Naive thymus-derived CD4-positive, alpha-beta T cell (primary cell): ENCODE measurements at regions of chr10 and their contacts with region 1.

Region 1: GRCh38 chr10:98446661-98447221 is at the start of gene HPS1:
- DNase-seq: peak; percentile 60 to 88 (median 79)
- ATAC-seq: peak; percentile 93
- H3K4me3 ChIP-seq: peak within 1 kb of the TSS; percentile 87
- H3K4me3 Mint-ChIP-seq: peak within 1 kb of the TSS; percentile 76 to 96 (median 92)
- H3K27ac ChIP-seq: peak within 1 kb of the TSS; percentile 88
- H3K27ac Mint-ChIP-seq: peak within 1 kb of the TSS; percentile 75 to 97 (median 89)
- H3K4me1 ChIP-seq: peaks cover 19 to 21% of the 10 kb centered on the region in 2 donors
- H3K4me1 Mint-ChIP-seq: peaks cover 18 to 56% (median 44%) of the 10 kb centered on the region in 7 donors
- H3K27me3 ChIP-seq: no peaks in the 10 kb centered on the region
- H3K27me3 Mint-ChIP-seq: peaks cover 0 to 20% (median 6%) of the 10 kb centered on the region in 5 donors
- total RNA-seq, gene HPS1: 68.5 to 107 (median 90.9) TPM

Region 2: GRCh38 chr10:98414932-98415730 is 31.6 kb before region 1 on chr10 and contains the start of gene PYROXD2:
- CTCF ChIA-PET with region 1: no interaction called
- POLR2A ChIA-PET with region 1: interaction called, 5 read pairs
- intact Hi-C with region 1: loop called in 1 of 2 experiments (anchors 1 kb)
- DNase-seq: peak in 8 of 9 donors; percentile 28 to 74 (median 56)
- ATAC-seq: peak; percentile 86
- H3K4me3 ChIP-seq: peak within 1 kb of the TSS; percentile 58
- H3K4me3 Mint-ChIP-seq: peak within 1 kb of the TSS; percentile 90 to 99 (median 96)
- H3K27ac ChIP-seq: peak within 1 kb of the TSS; percentile 69
- H3K27ac Mint-ChIP-seq: peak within 1 kb of the TSS; percentile 85 to 98 (median 94)
- H3K4me1 ChIP-seq: peaks cover 0 to 13% of the 10 kb centered on the region in 2 donors
- H3K4me1 Mint-ChIP-seq: peaks cover 12 to 42% (median 25%) of the 10 kb centered on the region in 7 donors
- H3K27me3 ChIP-seq: no peaks in the 10 kb centered on the region
- H3K27me3 Mint-ChIP-seq: no peaks in the 10 kb centered on the region
- total RNA-seq, gene PYROXD2: 11.9 to 37.1 (median 26.9) TPM

Region 3: GRCh38 chr10:99430451-99431189 is 983.9 kb after region 1 on chr10 and contains the start of gene GOT1:
- CTCF ChIA-PET with region 1: no interaction called
- POLR2A ChIA-PET with region 1: no interaction called
- intact Hi-C with region 1: loop called (anchors 1 to 10 kb)
- DNase-seq: peak; percentile 72 to 95 (median 94)
- ATAC-seq: peak; percentile 97
- H3K4me3 ChIP-seq: peak within 1 kb of the TSS; percentile 81
- H3K4me3 Mint-ChIP-seq: peak within 1 kb of the TSS; percentile 94 to 100 (median 98)
- H3K27ac ChIP-seq: peak within 1 kb of the TSS; percentile 90
- H3K27ac Mint-ChIP-seq: peak within 1 kb of the TSS; percentile 88 to 97 (median 94)
- H3K4me1 ChIP-seq: peaks cover 5 to 9% of the 10 kb centered on the region in 2 donors
- H3K4me1 Mint-ChIP-seq: peaks cover 19 to 53% (median 44%) of the 10 kb centered on the region in 7 donors
- H3K27me3 ChIP-seq: no peaks in the 10 kb centered on the region
- H3K27me3 Mint-ChIP-seq: no peaks in the 10 kb centered on the region
- total RNA-seq, gene GOT1: 8.0 to 22.2 (median 10.2) TPM

Region 4: GRCh38 chr10:99659031-99659867 is 1212.5 kb after region 1 on chr10 and contains the start of gene ENTPD7:
- CTCF ChIA-PET with region 1: no interaction called
- POLR2A ChIA-PET with region 1: no interaction called
- intact Hi-C with region 1: loop called in 1 of 2 experiments (anchors 5 kb)
- DNase-seq: peak; percentile 66 to 90 (median 77)
- ATAC-seq: peak; percentile 99
- H3K4me3 ChIP-seq: peak within 1 kb of the TSS; percentile 72
- H3K4me3 Mint-ChIP-seq: peak within 1 kb of the TSS; percentile 80 to 95 (median 92)
- H3K27ac ChIP-seq: peak within 1 kb of the TSS; percentile 69
- H3K27ac Mint-ChIP-seq: peak within 1 kb of the TSS; percentile 5 to 88 (median 73)
- H3K4me1 ChIP-seq: no peaks in the 10 kb centered on the region
- H3K4me1 Mint-ChIP-seq: peaks cover 17 to 32% (median 21%) of the 10 kb centered on the region in 7 donors
- H3K27me3 ChIP-seq: no peaks in the 10 kb centered on the region
- H3K27me3 Mint-ChIP-seq: peaks cover 0 to 25% (median 15%) of the 10 kb centered on the region in 5 donors
- total RNA-seq, gene ENTPD7: 2.5 to 6.6 (median 3.4) TPM